ENCODE measurements at regions of chr1 and their contacts with region 1.

Region 1: DNA sequence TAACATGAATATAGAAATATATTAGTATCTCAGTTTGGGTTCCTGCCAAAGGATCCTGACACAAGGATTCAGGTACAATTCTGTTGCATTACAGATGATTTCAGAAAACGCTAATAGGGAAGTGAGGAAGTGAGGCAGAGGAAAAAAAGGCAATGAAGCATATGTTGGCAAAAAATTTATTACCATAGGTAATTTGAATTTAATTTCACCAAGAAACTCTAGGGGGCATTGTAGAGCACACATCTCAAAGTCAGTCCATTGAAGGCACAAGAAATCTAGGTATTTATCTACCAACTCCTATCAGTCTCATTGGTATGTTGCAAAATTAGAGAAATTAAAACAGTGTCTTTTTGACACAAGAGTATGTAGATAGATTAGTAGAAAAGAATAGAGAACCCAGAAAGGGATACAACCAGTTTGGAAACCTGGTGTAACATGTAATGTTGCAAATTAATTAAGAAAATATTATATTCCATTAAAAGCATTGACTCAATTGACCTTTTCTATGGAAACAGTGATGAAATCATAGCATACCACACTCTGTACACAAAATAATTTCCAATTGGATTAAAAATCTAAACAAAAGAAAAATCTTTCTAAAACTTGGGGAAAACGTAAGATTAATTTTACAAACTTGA is 104.9 kb upstream of the SNX7 start:
- DNase-seq: peak; percentile 23
- H3K4me3 ChIP-seq: no peak overlapping the region
- H3K27ac ChIP-seq: no peak overlapping the region
- H3K4me1 ChIP-seq: no peaks in the 10 kb centered on the region
- H3K27me3 ChIP-seq: no peaks in the 10 kb centered on the region
- CTCF ChIP-seq: peak; percentile 60 to 68

Region 2: DNA sequence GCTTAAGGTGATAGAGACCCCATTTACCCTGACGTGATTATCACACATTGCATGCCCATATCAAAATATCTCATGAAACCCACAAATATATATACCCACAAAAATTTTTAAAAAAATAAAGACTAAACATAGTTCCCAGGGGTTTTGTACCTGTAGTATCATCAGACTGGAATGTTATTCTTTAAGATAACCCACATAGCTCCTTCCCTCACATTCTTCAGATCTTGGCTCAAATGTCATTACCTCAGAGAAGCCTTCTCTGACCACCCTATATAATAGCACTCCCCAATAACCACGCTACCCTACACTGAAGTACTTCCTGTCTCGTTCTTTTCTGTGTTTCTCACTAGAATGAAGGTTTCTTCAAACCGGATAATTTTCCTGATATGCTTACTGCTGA is 33.4 kb before region 1 on chr1:
- CTCF ChIA-PET with region 1: no interaction called
- dilution Hi-C with region 1: no loop called
- in situ Hi-C with region 1: no loop called
- intact Hi-C with region 1: no loop called
- DNase-seq: peak; percentile 28
- H3K4me3 ChIP-seq: no peak overlapping the region
- H3K27ac ChIP-seq: no peak overlapping the region
- H3K4me1 ChIP-seq: no peaks in the 10 kb centered on the region
- H3K27me3 ChIP-seq: no peaks in the 10 kb centered on the region
- CTCF ChIP-seq: no peak

Region 3: DNA sequence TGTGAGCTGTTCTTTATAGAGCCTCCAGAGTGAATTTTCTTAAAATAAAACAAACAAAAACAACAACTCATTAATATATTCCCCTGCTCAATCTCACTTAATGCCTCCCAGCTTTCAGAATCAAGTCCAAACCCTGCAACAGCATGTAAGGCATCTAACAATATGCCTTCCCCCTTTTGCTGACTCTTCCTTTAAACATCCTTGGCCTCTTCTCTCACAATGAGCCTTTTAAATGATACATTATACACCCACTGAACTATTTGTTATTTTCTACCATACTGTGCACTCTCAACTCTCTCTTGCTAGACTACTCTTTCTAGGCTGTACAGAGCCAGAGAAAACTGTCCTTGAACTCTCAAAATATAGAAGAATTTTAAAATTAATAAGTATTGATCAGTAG is 10.3 kb before region 1 on chr1:
- CTCF ChIA-PET with region 1: no interaction called
- dilution Hi-C with region 1: no loop called
- in situ Hi-C with region 1: no loop called
- intact Hi-C with region 1: loop called (anchors 1 kb)
- DNase-seq: peak; percentile 36
- H3K4me3 ChIP-seq: no peak overlapping the region
- H3K27ac ChIP-seq: no peak overlapping the region
- H3K4me1 ChIP-seq: no peaks in the 10 kb centered on the region
- H3K27me3 ChIP-seq: no peaks in the 10 kb centered on the region
- CTCF ChIP-seq: no peak

Region 4: DNA sequence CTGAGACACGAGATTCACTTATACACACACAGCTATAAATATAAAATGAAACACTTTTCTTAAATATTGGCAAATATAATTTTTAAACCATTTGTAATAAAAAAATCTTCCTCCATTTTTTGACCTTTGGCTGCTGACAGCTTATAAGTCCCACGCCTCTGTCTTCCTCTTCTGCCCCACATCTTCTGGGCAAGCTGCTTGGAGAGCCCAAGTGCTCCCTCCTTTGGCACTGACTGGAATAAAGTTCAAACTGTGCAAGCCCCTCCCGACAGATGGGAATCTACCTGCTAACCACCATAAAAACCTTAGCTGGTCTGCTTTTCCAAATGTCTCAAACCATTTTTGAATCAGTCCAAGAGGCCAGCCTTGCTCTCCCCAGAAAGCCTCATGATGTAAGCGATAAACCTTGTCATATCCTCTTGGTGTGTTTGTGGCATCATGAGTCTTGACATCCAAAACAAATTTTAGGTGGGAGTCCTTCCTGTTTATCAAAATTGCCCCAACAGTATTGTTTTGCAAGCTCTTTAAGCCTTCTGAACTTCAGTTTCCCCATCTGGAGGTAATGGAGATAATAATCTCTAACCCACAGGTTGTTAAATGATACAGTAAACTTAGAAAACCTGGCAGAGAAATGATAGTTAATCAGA is 204.7 kb after region 1 on chr1:
- CTCF ChIA-PET with region 1: no interaction called
- dilution Hi-C with region 1: no loop called
- in situ Hi-C with region 1: no loop called
- intact Hi-C with region 1: loop called (anchors 10 kb)
- DNase-seq: peak; percentile 7
- H3K4me3 ChIP-seq: no peak overlapping the region
- H3K27ac ChIP-seq: no peak overlapping the region
- H3K4me1 ChIP-seq: no peaks in the 10 kb centered on the region
- H3K27me3 ChIP-seq: no peaks in the 10 kb centered on the region
- CTCF ChIP-seq: peak; percentile 2 to 34